ENCODE measurements at regions of chr17 and their contacts with region 1.

Region 1: GRCh38 chr17:75749545-75750389 is 15.2 kb downstream of the GALK1 start:
- DNase-seq: peak; percentile 78 to 85 (median 80)
- H3K4me3 ChIP-seq: peak overlapping the region in 1 of 7 experiments; percentile 37
- H3K27ac ChIP-seq: no peak overlapping the region
- H3K4me1 ChIP-seq: peaks cover 0 to 22% (median 18%) of the 10 kb centered on the region in 4 experiments
- H3K27me3 ChIP-seq: no peaks in the 10 kb centered on the region

Region 2: DNA sequence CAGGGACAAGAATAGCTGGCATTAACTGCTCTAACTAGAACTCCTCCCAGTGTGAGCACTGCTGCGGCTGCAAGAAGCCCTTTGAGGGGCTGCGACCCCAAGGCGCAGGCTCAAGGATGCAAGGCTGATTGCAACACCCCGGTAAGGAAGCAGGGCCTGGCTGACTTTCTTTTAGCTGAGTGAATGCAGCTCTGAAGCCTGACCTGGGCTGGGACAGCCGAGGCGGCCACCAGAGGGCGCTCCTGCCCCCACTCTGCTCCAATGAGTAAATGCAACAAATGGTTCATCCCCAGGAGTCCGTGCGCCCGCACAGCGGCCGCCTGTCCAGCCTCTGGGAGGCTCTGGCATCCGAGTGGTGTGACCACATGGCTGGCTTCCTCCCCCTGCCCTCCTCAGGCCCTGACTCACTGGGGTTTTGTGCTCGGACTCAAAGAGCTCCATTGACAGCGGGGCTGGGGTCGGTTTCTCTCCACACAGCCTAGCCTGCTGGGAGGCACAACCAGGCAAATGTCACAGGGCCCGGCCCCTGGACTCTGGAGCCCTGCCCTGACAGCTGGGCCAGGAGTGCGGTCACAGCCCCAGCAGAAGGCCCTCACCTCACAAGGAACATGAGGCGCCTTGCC is 116.8 kb before region 1 on chr17 and contains the start of gene SMIM5:
- CTCF ChIA-PET with region 1: interaction called, 229 read pairs
- POLR2A ChIA-PET with region 1: interaction called, 3 read pairs
- DNase-seq: peak; percentile 75 to 86 (median 80)
- H3K4me3 ChIP-seq: peak within 1 kb of the TSS in 3 of 7 experiments; percentile 19 to 46 (median 39)
- H3K27ac ChIP-seq: no peak within 1 kb of the TSS
- H3K4me1 ChIP-seq: peaks cover 0 to 44% (median 36%) of the 10 kb centered on the region in 4 experiments
- H3K27me3 ChIP-seq: no peaks in the 10 kb centered on the region

Region 3: DNA sequence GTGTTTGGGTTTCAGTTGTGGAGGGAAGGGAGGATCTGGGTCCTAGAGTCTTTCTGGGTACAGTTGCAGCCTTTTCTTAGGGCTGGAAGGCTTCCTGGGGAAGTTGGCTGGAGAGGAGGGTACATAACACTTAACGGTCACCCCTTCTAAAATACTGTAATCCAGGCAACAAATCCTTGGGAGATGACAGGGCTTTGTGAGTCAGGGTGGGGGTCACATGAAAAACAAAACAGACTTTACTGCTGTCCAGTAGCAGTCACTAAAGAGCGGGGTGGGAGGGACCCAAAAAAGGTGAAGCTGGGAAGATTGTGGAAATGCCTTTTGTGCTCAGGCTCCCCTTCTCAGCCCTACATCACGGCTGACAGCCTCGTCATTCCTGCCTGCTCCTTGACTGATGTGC is 76.3 kb before region 1 on chr17:
- CTCF ChIA-PET with region 1: interaction called, 257 read pairs
- POLR2A ChIA-PET with region 1: interaction called, 3 read pairs
- DNase-seq: no peak
- H3K4me3 ChIP-seq: no peak overlapping the region
- H3K27ac ChIP-seq: no peak overlapping the region
- H3K4me1 ChIP-seq: peaks cover 0 to 4% (median under 1%) of the 10 kb centered on the region in 4 experiments
- H3K27me3 ChIP-seq: no peaks in the 10 kb centered on the region

Region 4: DNA sequence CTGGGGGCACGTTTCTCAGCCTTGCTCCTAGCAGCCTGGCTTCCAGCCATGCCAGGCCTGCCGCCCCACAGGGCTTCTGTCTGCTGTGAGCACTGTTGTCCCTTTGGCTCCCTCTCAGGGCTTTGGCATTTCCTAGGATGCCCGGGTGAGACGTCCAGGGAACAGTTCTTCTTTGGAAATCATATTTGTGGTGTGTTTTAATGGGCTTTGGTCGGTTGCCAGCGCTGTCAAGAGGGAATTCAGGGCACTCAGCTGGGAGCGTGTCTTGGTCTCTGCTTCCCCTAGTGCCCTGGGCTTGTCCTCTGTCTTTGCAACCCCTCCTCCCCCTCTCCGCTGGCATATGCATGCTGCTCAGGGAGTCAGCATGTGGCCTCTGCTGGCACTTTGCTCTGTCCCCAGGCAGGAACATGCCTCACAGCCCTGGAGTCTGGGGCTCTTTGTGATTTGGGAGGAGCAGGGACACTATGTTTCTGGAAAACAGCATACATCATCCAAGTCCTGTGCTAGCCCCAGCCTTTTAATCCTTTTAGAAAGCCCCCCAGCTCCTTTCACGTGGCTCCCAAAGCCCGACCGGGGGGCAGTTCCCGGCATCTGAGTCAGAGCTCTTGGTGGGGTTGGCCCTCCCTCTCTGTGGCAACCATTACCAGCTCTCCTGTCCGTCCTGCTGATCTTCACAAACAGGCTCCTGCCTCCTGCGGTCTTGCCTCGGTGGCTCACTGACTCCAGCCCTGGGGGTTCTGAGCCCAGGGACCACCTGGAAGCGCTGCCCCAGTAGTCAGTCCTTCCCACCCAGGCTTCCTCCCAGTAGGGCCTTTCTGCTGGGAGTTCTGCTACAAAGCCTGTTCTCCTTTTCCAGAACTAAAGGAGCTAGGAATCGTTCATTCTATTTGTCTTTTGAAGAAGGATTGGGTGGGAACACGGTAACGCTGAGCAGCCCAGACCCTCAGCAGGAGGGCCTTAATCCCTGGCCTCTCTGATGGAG is 56.0 kb before region 1 on chr17:
- CTCF ChIA-PET with region 1: interaction called, 58 read pairs
- POLR2A ChIA-PET with region 1: no interaction called
- DNase-seq: no peak
- H3K4me3 ChIP-seq: no peak overlapping the region
- H3K27ac ChIP-seq: peak overlapping the region in 1 of 2 experiments; percentile 2
- H3K4me1 ChIP-seq: peaks cover 7 to 32% (median 27%) of the 10 kb centered on the region in 4 experiments
- H3K27me3 ChIP-seq: no peaks in the 10 kb centered on the region

Region 5: GRCh38 chr17:75738218-75738802 is 11.5 kb before region 1 on chr17:
- CTCF ChIA-PET with region 1: interaction called, 50 read pairs
- POLR2A ChIA-PET with region 1: no interaction called
- DNase-seq: peak in 2 of 3 donors; percentile 56 to 62
- H3K4me3 ChIP-seq: no peak overlapping the region
- H3K27ac ChIP-seq: no peak overlapping the region
- H3K4me1 ChIP-seq: peaks cover 0 to 11% (median 6%) of the 10 kb centered on the region in 4 experiments
- H3K27me3 ChIP-seq: no peaks in the 10 kb centered on the region